WTC11 (cell line): ENCODE measurements at regions of chr7 and their contacts with region 1.

Region 1: DNA sequence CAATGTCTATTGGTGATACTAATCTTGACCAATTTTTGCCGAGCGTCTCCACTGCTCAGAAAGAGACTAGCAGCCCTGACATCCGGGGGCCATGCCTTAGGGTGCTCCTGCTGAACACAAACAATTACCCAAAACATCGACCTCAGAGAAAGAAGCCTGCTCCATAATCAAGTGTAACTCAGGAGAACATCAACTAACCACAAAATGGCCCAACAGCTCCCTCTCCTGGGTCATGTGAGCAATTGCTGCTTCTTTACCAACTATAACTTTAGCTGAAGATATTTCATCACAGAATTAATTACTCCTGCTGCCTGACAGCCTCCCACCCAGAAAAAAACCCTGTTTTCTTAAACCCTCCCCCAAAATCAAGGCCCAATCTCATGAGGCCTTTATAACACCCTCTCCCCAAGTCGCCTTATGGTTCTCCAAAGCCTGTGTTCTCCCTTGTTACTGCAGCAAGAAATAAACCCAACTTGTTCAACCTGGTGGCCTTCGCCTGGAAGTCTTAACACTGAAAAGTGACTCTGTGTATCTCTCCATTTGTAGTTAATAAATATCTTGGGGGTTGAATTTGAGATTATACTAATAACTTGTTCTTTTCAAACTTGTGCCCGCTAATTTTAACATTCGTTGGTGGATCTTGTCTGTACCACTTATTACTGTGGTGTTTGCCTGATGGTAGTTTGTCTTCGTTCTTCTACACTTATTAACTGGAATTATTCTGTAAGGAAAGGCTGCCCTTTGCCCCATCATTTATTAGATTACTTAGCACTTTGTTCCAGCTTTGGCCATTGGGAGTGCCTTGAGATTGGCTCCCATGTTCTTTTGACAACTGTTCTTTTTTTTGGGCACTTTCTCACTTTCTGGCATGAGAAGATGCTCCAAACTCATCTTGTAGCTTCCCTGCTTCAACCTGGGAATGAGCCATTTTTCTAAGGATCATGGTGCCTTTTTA is 21.2 kb upstream of the RAMP3 start:
- DNase-seq: peak; percentile 52
- ATAC-seq: peak; percentile 80
- H3K4me3 Mint-ChIP-seq: no peak overlapping the region
- H3K27ac Mint-ChIP-seq: no peak overlapping the region
- H3K4me1 Mint-ChIP-seq: peaks cover 4% of the 10 kb centered on the region
- H3K27me3 Mint-ChIP-seq: no peaks in the 10 kb centered on the region; the same call in 1 of the 2 replicates
- CTCF ChIP-seq: peak; percentile 75

Region 2: DNA sequence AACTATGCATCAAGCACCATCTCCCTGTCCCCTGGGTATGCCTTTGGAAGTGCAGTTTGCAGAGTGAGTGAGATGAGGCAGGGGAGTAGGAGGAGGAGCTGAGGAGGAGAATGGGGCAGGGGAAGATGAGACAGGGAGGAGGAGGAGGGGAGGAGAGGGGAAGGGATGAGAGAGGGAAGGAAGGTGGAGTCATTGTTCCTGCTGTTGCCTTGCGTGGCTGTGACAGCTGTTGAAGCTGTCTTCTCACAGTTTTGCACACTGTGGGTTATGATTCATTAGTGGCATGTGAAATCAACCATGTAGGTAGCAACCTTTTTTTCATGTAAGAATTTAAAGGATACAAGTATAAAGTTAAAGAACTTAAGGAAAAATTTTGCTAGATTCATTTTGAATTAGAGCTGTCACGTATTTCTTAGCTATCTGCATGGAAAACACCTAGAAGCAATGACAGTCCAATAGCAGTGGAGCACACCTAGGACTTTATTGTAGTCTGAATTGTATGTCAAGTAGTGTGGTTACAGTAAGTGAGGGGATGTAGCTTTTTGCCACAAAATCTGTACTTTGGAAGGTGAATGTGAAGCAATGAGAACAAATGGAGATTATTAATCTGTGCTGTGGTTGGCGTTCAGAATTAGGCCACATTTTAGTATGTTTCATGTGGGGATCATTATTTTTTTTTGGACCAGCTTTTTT is 114.6 kb before region 1 on chr7:
- CTCF ChIA-PET with region 1: interaction called, 4 read pairs
- POLR2A ChIA-PET with region 1: interaction called, 11 read pairs
- DNase-seq: no peak
- ATAC-seq: peak; percentile 51; the same call in 1 of the 2 replicates
- H3K4me3 Mint-ChIP-seq: no peak overlapping the region
- H3K27ac Mint-ChIP-seq: no peak overlapping the region
- H3K4me1 Mint-ChIP-seq: 0 out of 2 replicates have a peak, but pooled peaks cover 3% of the 10 kb centered on the region
- H3K27me3 Mint-ChIP-seq: no peaks in the 10 kb centered on the region
- CTCF ChIP-seq: no peak

Region 3: DNA sequence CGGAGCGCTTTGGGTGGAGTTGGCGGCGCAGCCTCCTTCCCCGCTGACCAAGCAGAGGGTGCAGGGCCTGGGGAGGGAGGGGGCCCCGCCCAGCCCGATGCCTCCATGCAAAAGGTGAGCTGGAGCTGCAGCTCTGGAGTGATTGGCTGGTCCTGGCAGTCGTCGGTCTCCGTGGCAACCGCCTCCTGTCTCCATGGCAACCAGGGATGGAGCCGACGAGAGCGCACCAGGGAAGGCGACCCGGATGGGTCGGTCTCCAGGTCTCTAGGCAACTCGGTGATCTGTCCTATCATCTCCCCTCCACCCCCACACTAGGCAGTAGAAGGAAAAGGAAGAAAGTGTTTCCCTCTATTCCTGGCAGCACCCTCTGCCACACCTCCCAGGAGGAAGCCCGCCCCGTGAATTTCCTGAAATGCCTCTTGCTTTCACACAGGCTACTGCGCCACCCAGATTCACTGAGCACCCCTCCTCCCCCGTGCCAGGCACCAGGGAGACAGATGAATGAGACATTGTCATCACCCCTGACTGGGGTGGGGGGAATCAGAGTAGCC is 47.0 kb before region 1 on chr7:
- CTCF ChIA-PET with region 1: interaction called, 15 read pairs
- POLR2A ChIA-PET with region 1: no interaction called
- DNase-seq: peak; percentile 95
- ATAC-seq: peak; percentile 61
- H3K4me3 Mint-ChIP-seq: peak overlapping the region; percentile 74
- H3K27ac Mint-ChIP-seq: no peak overlapping the region
- H3K4me1 Mint-ChIP-seq: peaks cover 15% of the 10 kb centered on the region
- H3K27me3 Mint-ChIP-seq: peaks cover 24% of the 10 kb centered on the region
- CTCF ChIP-seq: no peak

Region 4: GRCh38 chr7:45122975-45123860 is 13.2 kb before region 1 on chr7:
- CTCF ChIA-PET with region 1: interaction called, 23 read pairs
- POLR2A ChIA-PET with region 1: no interaction called
- DNase-seq: no peak
- ATAC-seq: no peak
- H3K4me3 Mint-ChIP-seq: no peak overlapping the region
- H3K27ac Mint-ChIP-seq: no peak overlapping the region
- H3K4me1 Mint-ChIP-seq: peaks cover 12% of the 10 kb centered on the region
- H3K27me3 Mint-ChIP-seq: no peaks in the 10 kb centered on the region
- CTCF ChIP-seq: no peak

Region 5: DNA sequence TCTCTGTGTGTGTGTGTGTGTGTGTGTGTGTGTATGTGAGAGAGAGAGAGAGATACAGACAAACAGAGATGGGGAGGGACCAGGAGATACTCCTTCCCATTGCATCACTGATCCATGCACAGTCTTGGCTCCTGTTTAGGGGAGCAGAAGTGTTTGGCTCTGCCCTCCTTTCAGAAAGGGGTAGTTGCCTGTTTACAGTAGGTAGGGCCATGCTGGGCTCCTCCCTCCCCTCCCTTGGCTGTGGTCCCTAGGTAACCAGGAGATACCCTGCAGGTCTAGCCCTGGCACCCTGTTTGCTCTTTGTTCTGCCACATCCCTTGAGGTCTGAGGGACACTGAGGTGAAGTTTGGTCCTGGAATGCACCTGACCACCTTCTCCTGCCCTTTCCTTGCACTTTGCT is 116.5 kb after region 1 on chr7:
- CTCF ChIA-PET with region 1: no interaction called
- POLR2A ChIA-PET with region 1: no interaction called
- DNase-seq: no peak
- ATAC-seq: no peak
- H3K4me3 Mint-ChIP-seq: no peak overlapping the region
- H3K27ac Mint-ChIP-seq: no peak overlapping the region
- H3K4me1 Mint-ChIP-seq: no peaks in the 10 kb centered on the region
- H3K27me3 Mint-ChIP-seq: no peaks in the 10 kb centered on the region; the same call in 1 of the 2 replicates
- CTCF ChIP-seq: no peak

Region 6: DNA sequence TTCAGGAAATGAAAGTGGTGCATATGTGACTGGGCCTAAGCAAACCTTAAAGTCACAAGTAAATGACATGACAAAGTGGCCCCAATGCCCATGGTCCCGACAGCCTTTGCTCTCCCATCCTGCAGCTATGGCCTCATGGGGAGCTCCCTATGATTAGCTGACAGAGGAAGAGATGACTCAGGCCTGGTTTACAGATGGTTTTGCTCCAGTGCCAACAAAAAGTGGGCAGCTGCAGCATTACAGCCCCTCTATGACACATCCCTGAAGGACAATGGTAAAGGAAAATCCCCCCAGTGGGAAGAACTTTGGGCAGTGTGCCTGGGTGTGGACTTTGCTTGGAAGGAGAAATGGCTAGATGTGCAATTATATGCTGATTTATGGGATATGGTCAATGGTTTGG is 332.7 kb after region 1 on chr7:
- CTCF ChIA-PET with region 1: no interaction called
- POLR2A ChIA-PET with region 1: no interaction called
- DNase-seq: no peak
- ATAC-seq: no peak
- H3K4me3 Mint-ChIP-seq: no peak overlapping the region
- H3K27ac Mint-ChIP-seq: no peak overlapping the region
- H3K4me1 Mint-ChIP-seq: no peaks in the 10 kb centered on the region
- H3K27me3 Mint-ChIP-seq: peaks cover 12% of the 10 kb centered on the region
- CTCF ChIP-seq: no peak